CD14-positive monocyte (primary cell): ENCODE measurements at regions of chr17 and their contacts with region 1.

Region 1: GRCh38 chr17:67824735-67825626 is at the start of gene BPTF:
- DNase-seq: peak; percentile 90 to 93 (median 91)
- H3K4me3 ChIP-seq: peak within 1 kb of the TSS; percentile 75 to 93 (median 90)
- H3K4me3 Mint-ChIP-seq: peak within 1 kb of the TSS; percentile 98 to 99
- H3K27ac ChIP-seq: peak within 1 kb of the TSS; percentile 49 to 83
- H3K27ac Mint-ChIP-seq: peak within 1 kb of the TSS; percentile 89 to 97 (median 93)
- H3K4me1 ChIP-seq: peaks cover 27 to 43% of the 10 kb centered on the region in 2 donors
- H3K4me1 Mint-ChIP-seq: peaks cover 36% of the 10 kb centered on the region
- H3K27me3 ChIP-seq: peaks cover 4 to 21% of the 10 kb centered on the region in 2 donors
- H3K27me3 Mint-ChIP-seq: peaks cover 18 to 30% (median 26%) of the 10 kb centered on the region in 3 donors
- CTCF ChIP-seq: peak; percentile 93
- polyA plus RNA-seq, gene BPTF: 1.9 to 51.1 (median 4.5) TPM

Region 2: DNA sequence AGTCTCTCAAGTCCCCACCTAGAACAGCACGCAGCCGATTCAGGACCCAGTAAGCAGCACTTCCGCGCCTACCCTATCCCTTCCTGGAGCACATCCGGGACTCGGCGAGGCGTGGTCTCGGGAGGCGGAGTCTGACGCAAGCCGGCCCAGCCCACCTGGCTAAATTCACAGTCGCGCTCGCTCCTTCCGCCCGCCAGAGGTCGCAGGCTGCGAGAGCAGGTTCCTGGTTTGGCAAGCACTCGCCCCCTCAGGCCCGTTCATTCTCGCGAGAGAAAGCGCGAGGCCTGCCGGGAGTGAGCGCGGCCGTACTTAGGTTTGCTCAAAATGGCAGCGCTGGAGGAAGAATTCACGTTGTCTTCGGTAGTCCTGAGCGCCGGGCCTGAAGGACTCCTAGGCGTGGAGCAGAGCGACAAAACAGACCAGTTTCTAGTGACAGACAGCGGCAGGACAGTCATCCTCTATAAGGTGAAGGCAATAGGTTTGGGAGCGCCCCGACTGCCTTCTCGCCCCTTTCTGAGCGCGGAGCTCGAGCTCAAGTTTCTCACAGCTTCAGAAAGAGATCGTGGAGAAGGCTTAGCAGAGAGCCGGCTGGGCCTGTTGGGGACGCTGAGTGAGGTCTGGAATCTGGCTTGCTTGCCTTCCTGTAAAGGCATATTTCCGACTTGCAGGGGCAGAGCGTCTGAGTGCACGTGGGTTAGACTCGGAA is 107.2 kb before region 1 on chr17 and contains the start of gene NOL11:
- intact Hi-C with region 1: loop called in 1 of 2 experiments (anchors 5 kb)
- DNase-seq: peak; percentile 97 to 99 (median 99)
- H3K4me3 ChIP-seq: peak within 1 kb of the TSS; percentile 81 to 94 (median 83)
- H3K4me3 Mint-ChIP-seq: peak within 1 kb of the TSS; percentile 96 to 99
- H3K27ac ChIP-seq: peak within 1 kb of the TSS; percentile 84 to 93
- H3K27ac Mint-ChIP-seq: peak within 1 kb of the TSS; percentile 95 to 99 (median 96)
- H3K4me1 ChIP-seq: peaks cover 21 to 22% of the 10 kb centered on the region in 2 donors
- H3K4me1 Mint-ChIP-seq: peaks cover 15% of the 10 kb centered on the region
- H3K27me3 ChIP-seq: no peaks in the 10 kb centered on the region
- H3K27me3 Mint-ChIP-seq: peaks cover 0 to 2% (median 0%) of the 10 kb centered on the region in 3 donors
- CTCF ChIP-seq: peak; percentile 84
- polyA plus RNA-seq, gene NOL11: 5.2 to 11.4 (median 6.1) TPM

Region 3: GRCh38 chr17:67733371-67733940 is 91.5 kb before region 1 on chr17:
- intact Hi-C with region 1: no loop called
- DNase-seq: no peak
- H3K4me3 ChIP-seq: no peak overlapping the region
- H3K4me3 Mint-ChIP-seq: no peak overlapping the region
- H3K27ac ChIP-seq: no peak overlapping the region
- H3K27ac Mint-ChIP-seq: peak overlapping the region in 2 of 7 donors; percentile 19 to 23
- H3K4me1 ChIP-seq: no peaks in the 10 kb centered on the region
- H3K4me1 Mint-ChIP-seq: no peaks in the 10 kb centered on the region
- H3K27me3 ChIP-seq: no peaks in the 10 kb centered on the region
- H3K27me3 Mint-ChIP-seq: no peaks in the 10 kb centered on the region
- CTCF ChIP-seq: no peak

Region 4: DNA sequence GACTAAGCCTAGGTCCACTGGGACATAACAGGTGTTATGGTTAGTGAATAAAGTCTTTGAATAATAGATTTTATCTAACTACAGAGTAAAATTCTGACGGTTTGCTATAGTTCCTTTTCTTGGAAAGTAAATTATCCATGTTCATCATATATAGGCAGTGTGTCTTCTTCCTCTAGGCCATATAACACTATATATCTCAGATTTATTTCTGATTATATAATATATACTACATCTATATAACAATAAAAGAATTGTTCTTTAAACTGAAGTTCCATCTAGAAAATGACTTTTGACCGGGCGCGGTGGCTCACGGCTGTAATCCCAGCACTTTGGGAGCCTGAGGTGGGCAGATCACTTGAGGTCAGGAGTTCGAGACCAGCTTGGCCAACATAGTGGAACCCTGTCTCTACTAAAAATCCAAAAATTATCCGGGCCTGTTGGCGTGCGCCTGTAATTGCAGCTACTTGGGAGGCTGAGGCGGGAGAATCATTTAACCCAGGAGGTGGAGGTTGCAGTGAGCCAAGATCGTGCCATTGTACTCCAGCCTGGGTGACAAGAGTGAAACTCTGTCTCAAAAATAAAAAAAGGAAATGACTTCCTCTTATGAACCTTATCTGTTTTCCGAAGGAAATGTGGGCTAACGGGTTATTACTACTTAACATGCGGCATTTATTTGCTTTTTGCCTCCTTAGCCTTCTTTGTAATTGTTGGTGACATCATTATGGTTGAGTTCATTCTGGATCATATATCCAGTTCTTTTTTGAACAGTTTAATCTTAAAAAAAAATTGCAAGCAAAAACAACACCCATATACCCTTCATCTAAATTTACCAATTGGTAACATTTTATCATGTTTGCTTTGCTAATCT is 78.0 kb before region 1 on chr17:
- intact Hi-C with region 1: loop called in 1 of 2 experiments (anchors 10 kb)
- DNase-seq: no peak
- H3K4me3 ChIP-seq: no peak overlapping the region
- H3K4me3 Mint-ChIP-seq: no peak overlapping the region
- H3K27ac ChIP-seq: no peak overlapping the region
- H3K27ac Mint-ChIP-seq: peak overlapping the region in 1 of 7 donors; percentile 66
- H3K4me1 ChIP-seq: no peaks in the 10 kb centered on the region
- H3K4me1 Mint-ChIP-seq: peaks cover 2% of the 10 kb centered on the region
- H3K27me3 ChIP-seq: no peaks in the 10 kb centered on the region
- H3K27me3 Mint-ChIP-seq: peaks cover 0 to 2% (median 0%) of the 10 kb centered on the region in 3 donors
- CTCF ChIP-seq: no peak